ENCODE measurements at regions of chr20 and their contacts with region 1.

Region 1: GRCh38 chr20:53949319-53949889 is 121.0 kb downstream of the BCAS1 start:
- DNase-seq: peak; percentile 45 to 89 (median 86)
- ATAC-seq: peak; percentile 97
- H3K4me3 ChIP-seq: peak overlapping the region; percentile 1
- H3K4me3 Mint-ChIP-seq: peak overlapping the region; percentile 39 to 87 (median 76)
- H3K27ac ChIP-seq: peak overlapping the region; percentile 82
- H3K27ac Mint-ChIP-seq: peak overlapping the region; percentile 76 to 99 (median 97)
- H3K4me1 ChIP-seq: peaks cover 26 to 28% of the 10 kb centered on the region in 2 donors
- H3K4me1 Mint-ChIP-seq: peaks cover 23 to 47% (median 41%) of the 10 kb centered on the region in 7 donors
- H3K27me3 ChIP-seq: no peaks in the 10 kb centered on the region
- H3K27me3 Mint-ChIP-seq: peaks cover 0 to 2% (median 0%) of the 10 kb centered on the region in 5 donors

Region 2: DNA sequence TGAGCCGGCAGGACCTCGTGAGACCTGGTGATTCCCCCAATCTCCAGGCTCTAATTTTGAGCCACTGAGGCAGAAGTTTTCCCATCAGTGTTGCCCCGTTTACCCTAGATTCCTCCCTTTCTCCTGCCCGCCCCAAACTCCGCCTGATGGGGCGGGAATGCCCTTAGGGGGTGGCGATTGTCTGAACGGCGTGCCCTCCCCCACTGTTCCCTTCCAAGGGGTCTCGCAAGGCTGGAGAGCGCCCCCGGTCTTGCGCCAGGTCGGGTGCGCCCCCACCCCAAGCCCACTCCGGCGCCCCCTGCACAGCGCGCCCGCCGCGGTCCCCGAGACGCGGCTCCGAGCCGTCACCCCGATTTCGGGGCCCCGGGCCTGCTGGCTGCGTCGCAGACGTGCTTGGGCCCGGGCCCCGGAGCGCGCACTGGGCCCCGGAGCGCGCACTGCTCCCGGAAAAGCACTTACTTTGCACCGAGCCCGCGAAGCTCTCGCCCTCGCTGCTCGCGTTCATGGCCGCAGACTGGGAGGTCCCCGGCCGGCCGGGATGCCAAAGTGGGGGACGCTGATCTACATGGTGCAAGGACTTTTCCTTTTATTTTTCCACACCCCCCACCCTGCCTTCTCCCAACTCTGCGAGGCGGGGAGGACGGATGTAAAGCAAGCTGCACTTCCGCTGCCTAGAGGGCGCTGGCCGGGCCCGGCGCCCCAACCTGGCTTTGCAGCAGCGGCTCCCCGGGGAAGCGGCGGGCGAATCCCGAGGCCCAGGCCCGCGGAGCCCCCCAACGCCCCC is 1758.1 kb before region 1 on chr20 and contains the start of gene ZFP64:
- CTCF ChIA-PET with region 1: no interaction called
- POLR2A ChIA-PET with region 1: interaction called, 3 read pairs
- intact Hi-C with region 1: loop called (anchors 5 to 10 kb)
- DNase-seq: peak; percentile 72 to 85 (median 83)
- ATAC-seq: peak; percentile 89
- H3K4me3 ChIP-seq: peak within 1 kb of the TSS; percentile 88
- H3K4me3 Mint-ChIP-seq: peak within 1 kb of the TSS; percentile 81 to 96 (median 94)
- H3K27ac ChIP-seq: peak within 1 kb of the TSS; percentile 78
- H3K27ac Mint-ChIP-seq: peak within 1 kb of the TSS; percentile 86 to 95 (median 93)
- H3K4me1 ChIP-seq: peaks cover 0 to 10% of the 10 kb centered on the region in 2 donors
- H3K4me1 Mint-ChIP-seq: peaks cover 7 to 27% (median 18%) of the 10 kb centered on the region in 7 donors
- H3K27me3 ChIP-seq: no peaks in the 10 kb centered on the region
- H3K27me3 Mint-ChIP-seq: no peaks in the 10 kb centered on the region
- total RNA-seq, gene ZFP64: 8.0 to 14.6 (median 11.6) TPM

Region 3: DNA sequence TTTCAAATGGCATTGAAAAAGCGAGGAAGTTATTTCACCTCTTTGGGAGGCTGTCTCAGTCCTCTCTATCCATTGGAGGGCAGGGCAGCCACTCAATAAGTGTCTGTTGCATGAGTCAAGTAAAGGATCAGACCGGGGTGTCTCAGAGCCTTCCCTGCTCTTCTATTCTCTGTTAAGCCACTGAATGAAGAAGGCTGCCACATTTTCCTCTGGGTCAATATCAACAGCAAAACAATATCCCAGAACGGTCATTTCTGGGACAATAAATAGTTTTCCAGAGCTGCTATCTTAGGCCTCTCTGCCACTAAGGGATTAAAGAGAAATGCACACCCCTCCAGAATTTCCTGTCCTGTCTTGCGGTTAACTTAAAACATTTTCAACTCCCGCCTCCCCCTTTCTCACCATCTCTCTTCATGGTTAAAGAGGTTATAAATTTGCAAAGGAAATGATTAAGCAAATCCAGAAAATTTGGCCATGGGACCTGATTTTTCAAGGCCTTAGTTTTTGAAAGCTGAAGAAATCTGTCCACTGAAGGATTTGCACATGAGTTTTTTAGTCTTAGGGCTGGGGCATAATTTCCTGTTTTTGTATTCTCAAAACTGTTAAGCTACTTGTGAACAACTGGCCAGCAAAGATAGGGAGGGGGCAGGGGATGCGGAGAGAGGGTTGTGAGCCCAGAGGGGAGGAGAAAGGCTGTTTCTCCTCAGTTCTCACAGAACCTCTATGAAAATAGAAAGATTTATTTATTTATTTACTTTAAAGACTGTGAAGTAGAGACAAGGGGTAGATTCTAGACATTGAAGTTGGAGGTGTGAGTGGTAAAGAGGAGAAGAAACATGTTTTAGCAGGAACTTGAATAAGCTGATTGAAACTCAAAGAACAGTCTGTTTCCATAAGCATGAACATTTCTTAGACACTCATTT is 14.7 kb before region 1 on chr20:
- CTCF ChIA-PET with region 1: interaction called, 9 read pairs
- POLR2A ChIA-PET with region 1: interaction called, 5 read pairs
- intact Hi-C with region 1: loop called in 1 of 2 experiments (anchors 1 kb)
- DNase-seq: peak in 4 of 9 donors; percentile 12 to 31 (median 22)
- ATAC-seq: peak; percentile 70
- H3K4me3 ChIP-seq: peak overlapping the region; percentile 28
- H3K4me3 Mint-ChIP-seq: peak overlapping the region; percentile 50 to 82 (median 70)
- H3K27ac ChIP-seq: peak overlapping the region; percentile 22
- H3K27ac Mint-ChIP-seq: peak overlapping the region; percentile 5 to 90 (median 78)
- H3K4me1 ChIP-seq: peaks cover 27 to 28% of the 10 kb centered on the region in 2 donors
- H3K4me1 Mint-ChIP-seq: peaks cover 30 to 64% (median 49%) of the 10 kb centered on the region in 7 donors
- H3K27me3 ChIP-seq: no peaks in the 10 kb centered on the region
- H3K27me3 Mint-ChIP-seq: no peaks in the 10 kb centered on the region

Region 4: DNA sequence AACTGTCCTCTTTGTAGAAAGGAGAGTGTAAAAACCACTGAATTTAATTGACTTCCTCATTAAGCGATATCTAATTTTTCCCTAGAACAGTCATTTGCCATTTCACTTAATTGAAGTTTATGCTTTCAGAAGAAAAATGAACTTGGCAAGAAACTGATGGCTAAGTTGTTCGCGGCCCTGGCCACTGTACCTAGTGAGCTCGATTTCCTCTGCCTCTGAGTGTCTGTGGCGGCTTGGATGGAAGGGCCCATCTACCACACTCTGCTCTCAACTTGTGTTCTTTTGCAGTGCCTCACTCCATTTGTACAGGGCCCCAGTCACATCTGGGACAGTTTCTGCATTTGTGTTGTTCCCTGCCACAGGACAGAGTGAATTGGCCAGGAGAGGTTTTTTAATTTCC is 18.1 kb after region 1 on chr20:
- CTCF ChIA-PET with region 1: no interaction called
- POLR2A ChIA-PET with region 1: no interaction called
- intact Hi-C with region 1: no loop called
- DNase-seq: no peak
- ATAC-seq: no peak
- H3K4me3 ChIP-seq: no peak overlapping the region
- H3K4me3 Mint-ChIP-seq: no peak overlapping the region
- H3K27ac ChIP-seq: no peak overlapping the region
- H3K27ac Mint-ChIP-seq: no peak overlapping the region
- H3K4me1 ChIP-seq: no peaks in the 10 kb centered on the region
- H3K4me1 Mint-ChIP-seq: no peaks in the 10 kb centered on the region
- H3K27me3 ChIP-seq: no peaks in the 10 kb centered on the region
- H3K27me3 Mint-ChIP-seq: peaks cover 0 to 17% (median 6%) of the 10 kb centered on the region in 5 donors

Region 5: GRCh38 chr20:53984356-53985149 is 35.1 kb after region 1 on chr20:
- CTCF ChIA-PET with region 1: no interaction called
- POLR2A ChIA-PET with region 1: no interaction called
- intact Hi-C with region 1: no loop called
- DNase-seq: no peak
- ATAC-seq: no peak
- H3K4me3 ChIP-seq: no peak overlapping the region
- H3K4me3 Mint-ChIP-seq: no peak overlapping the region
- H3K27ac ChIP-seq: no peak overlapping the region
- H3K27ac Mint-ChIP-seq: no peak overlapping the region
- H3K4me1 ChIP-seq: no peaks in the 10 kb centered on the region
- H3K4me1 Mint-ChIP-seq: peaks cover 0 to 7% (median 0%) of the 10 kb centered on the region in 7 donors
- H3K27me3 ChIP-seq: no peaks in the 10 kb centered on the region
- H3K27me3 Mint-ChIP-seq: peaks cover 0 to 31% (median 13%) of the 10 kb centered on the region in 5 donors

Region 6: DNA sequence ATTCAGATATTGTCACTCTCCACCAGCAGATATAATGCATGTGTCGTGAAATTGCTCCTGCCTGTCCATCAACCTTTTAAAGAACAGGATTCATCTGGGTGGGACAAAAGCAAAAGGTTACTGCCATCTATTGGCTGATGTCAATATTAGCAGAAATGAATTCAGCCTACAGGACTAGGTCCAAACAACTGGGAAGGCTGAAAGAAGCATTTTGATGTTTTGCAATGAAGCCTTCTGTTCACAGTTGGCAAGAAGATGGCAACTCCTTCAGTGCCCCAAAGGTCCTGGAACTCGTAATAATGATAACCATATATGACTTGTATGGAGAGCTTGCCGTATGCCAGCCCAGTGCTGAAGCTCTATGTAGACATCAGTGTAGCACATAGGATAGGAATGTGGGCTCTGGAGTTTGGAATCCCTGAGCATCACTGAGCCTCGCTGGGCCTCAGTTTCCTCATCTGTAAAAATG is 113.4 kb after region 1 on chr20:
- CTCF ChIA-PET with region 1: interaction called, 3 read pairs
- POLR2A ChIA-PET with region 1: no interaction called
- intact Hi-C with region 1: loop called (anchors 1 to 2 kb)
- DNase-seq: peak in 6 of 9 donors; percentile 8 to 40 (median 26)
- ATAC-seq: peak; percentile 61
- H3K4me3 ChIP-seq: no peak overlapping the region
- H3K4me3 Mint-ChIP-seq: no peak overlapping the region
- H3K27ac ChIP-seq: no peak overlapping the region
- H3K27ac Mint-ChIP-seq: no peak overlapping the region
- H3K4me1 ChIP-seq: peaks cover 0 to 9% of the 10 kb centered on the region in 2 donors
- H3K4me1 Mint-ChIP-seq: peaks cover 0 to 11% (median 7%) of the 10 kb centered on the region in 7 donors
- H3K27me3 ChIP-seq: no peaks in the 10 kb centered on the region
- H3K27me3 Mint-ChIP-seq: no peaks in the 10 kb centered on the region

Region 7: GRCh38 chr20:54207743-54208547 is 258.5 kb after region 1 on chr20 and contains the start of gene PFDN4:
- CTCF ChIA-PET with region 1: no interaction called
- POLR2A ChIA-PET with region 1: no interaction called
- intact Hi-C with region 1: loop called (anchors 5 kb)
- DNase-seq: peak; percentile 69 to 85 (median 80)
- ATAC-seq: peak; percentile 95
- H3K4me3 ChIP-seq: peak within 1 kb of the TSS; percentile 65
- H3K4me3 Mint-ChIP-seq: peak within 1 kb of the TSS; percentile 75 to 98 (median 97)
- H3K27ac ChIP-seq: peak within 1 kb of the TSS; percentile 89
- H3K27ac Mint-ChIP-seq: peak within 1 kb of the TSS; percentile 99 to 100 (median 100)
- H3K4me1 ChIP-seq: peaks cover 14 to 15% of the 10 kb centered on the region in 2 donors
- H3K4me1 Mint-ChIP-seq: peaks cover 20 to 41% (median 38%) of the 10 kb centered on the region in 7 donors
- H3K27me3 ChIP-seq: no peaks in the 10 kb centered on the region
- H3K27me3 Mint-ChIP-seq: no peaks in the 10 kb centered on the region
- total RNA-seq, gene PFDN4: 14.6 to 30.4 (median 17.7) TPM